PC-9 (cell line): ENCODE measurements at regions of chr5 and their contacts with region 1.

Region 1: GRCh38 chr5:96868603-96869371 is 7.5 kb upstream of the ERAP2 start:
- DNase-seq: peak in 1 of 2 experiments; percentile 63
- H3K4me3 ChIP-seq: no peak overlapping the region
- H3K27ac ChIP-seq: no peak overlapping the region
- H3K4me1 ChIP-seq: no peaks in the 10 kb centered on the region
- H3K27me3 ChIP-seq: no peaks in the 10 kb centered on the region
- CTCF ChIP-seq: peak; percentile 83

Region 2: DNA sequence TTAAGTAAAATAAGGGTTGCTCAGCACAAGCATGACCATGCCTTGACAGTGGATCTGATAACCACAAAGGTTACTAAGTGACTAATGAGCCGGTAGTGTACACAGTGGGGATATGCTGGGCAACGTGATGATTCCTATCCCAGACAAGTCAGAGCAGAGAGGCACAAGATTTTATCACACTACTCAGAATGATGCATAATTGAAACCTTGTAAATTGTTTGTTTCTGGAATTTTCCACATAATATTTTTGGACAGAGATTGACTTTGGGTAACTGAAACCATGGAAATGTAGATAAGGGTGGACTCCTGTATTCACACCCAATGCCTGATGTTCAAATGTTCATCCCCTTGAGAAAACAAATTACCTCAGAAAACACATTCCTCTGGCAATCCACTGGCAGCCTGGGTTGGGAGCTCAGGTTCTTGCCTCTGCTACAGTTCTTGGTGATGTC is 44.9 kb before region 1 on chr5:
- CTCF ChIA-PET with region 1: no interaction called
- POLR2A ChIA-PET with region 1: no interaction called
- intact Hi-C with region 1: no loop called
- DNase-seq: peak; percentile 49 to 91
- H3K4me3 ChIP-seq: no peak overlapping the region
- H3K27ac ChIP-seq: 0 out of 2 replicates have a peak overlapping the region, but pooled peaks have one; percentile 10
- H3K4me1 ChIP-seq: peaks cover 16% of the 10 kb centered on the region
- H3K27me3 ChIP-seq: no peaks in the 10 kb centered on the region
- CTCF ChIP-seq: no peak

Region 3: GRCh38 chr5:97142521-97143254 is 273.9 kb after region 1 on chr5 and contains the start of gene LIX1:
- CTCF ChIA-PET with region 1: interaction called, 13 read pairs
- POLR2A ChIA-PET with region 1: no interaction called
- intact Hi-C with region 1: loop called (anchors 5 kb)
- DNase-seq: peak in 1 of 2 experiments; percentile 26
- H3K4me3 ChIP-seq: no peak within 1 kb of the TSS
- H3K27ac ChIP-seq: no peak within 1 kb of the TSS
- H3K4me1 ChIP-seq: no peaks in the 10 kb centered on the region
- H3K27me3 ChIP-seq: no peaks in the 10 kb centered on the region
- CTCF ChIP-seq: peak; percentile 73
- total RNA-seq, gene LIX1: not detected in 2 replicates